ENCODE measurements at regions of chr12 and their contacts with region 1.

Region 1: DNA sequence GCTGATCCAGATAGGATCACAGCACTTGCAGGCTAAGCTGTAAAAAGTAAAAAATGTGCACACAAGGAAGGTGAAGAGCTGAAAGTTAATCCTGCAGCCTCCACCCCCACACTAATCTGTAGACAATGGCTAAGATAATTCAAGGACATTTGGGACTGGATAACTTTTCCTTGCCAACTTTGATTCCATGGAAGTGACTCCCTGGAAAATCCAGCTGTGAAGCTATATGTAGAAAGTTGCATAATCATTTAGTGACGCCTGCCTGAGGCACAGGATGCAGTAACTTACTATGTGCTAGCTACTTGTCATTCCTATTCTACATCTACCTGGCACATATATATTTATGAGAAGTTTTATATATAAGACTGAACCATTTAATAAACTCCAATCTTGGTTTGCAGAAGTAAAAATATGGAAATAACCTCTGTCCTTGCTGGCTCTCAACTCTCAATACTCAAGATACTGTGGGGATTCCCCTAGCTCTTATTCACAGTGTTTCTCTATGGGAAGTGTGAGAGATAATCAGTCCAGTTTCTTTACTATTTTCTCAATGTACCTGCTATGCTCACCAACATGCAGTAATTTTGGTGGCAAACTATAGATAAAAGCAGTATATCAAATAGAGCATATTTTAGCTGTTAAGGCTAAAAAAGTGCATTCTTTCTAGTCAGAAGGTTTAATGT is 14.8 kb downstream of the LDHB start:
- DNase-seq: peak in 1 of 14 experiments; percentile 25
- ATAC-seq: peak; percentile 41
- H3K4me3 ChIP-seq: no peak overlapping the region
- H3K4me3 Mint-ChIP-seq: no peak overlapping the region
- H3K27ac ChIP-seq: no peak overlapping the region
- H3K27ac Mint-ChIP-seq: peak overlapping the region; percentile 84
- H3K4me1 ChIP-seq: peaks cover 27% of the 10 kb centered on the region
- H3K4me1 Mint-ChIP-seq: peaks cover 91% of the 10 kb centered on the region
- H3K27me3 ChIP-seq: no peaks in the 10 kb centered on the region
- H3K27me3 Mint-ChIP-seq: no peaks in the 10 kb centered on the region
- CTCF ChIP-seq: no peak

Region 2: DNA sequence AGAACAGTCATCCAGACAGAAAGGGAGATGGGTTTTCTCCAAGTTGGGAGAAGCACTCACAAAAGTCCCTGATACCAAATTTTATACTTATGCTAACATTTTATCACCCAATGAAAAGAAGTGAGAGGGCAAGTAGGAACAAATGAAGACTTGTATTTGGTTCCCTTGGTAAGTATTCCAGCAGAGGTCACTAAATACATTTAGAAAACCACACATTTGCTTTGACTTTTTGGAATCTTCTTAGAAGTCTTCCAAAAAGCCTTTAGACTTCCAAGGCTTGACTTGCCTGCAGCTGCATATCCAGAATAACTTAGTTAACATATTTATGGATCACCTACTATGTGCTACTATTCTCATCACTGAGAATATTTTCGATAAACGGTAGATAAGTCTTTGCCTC is 35.1 kb before region 1 on chr12:
- CTCF ChIA-PET with region 1: no interaction called
- POLR2A ChIA-PET with region 1: no interaction called
- intact Hi-C with region 1: loop called in 1 of 2 experiments (anchors 5 kb)
- DNase-seq: peak in 3 of 14 experiments; percentile 54 to 60 (median 59)
- ATAC-seq: peak; percentile 58
- H3K4me3 ChIP-seq: no peak overlapping the region
- H3K4me3 Mint-ChIP-seq: no peak overlapping the region
- H3K27ac ChIP-seq: no peak overlapping the region
- H3K27ac Mint-ChIP-seq: no peak overlapping the region
- H3K4me1 ChIP-seq: peaks cover 3% of the 10 kb centered on the region
- H3K4me1 Mint-ChIP-seq: peaks cover 7% of the 10 kb centered on the region
- H3K27me3 ChIP-seq: no peaks in the 10 kb centered on the region
- H3K27me3 Mint-ChIP-seq: no peaks in the 10 kb centered on the region
- CTCF ChIP-seq: peak; percentile 76